Posterior vena cava (tissue), 2 donors: ENCODE measurements at regions of chr12 and their contacts with region 1.

Region 1: GRCh38 chr12:2205996-2206395 is 153.2 kb downstream of the CACNA1C start:
- DNase-seq: no peak

Region 2: GRCh38 chr12:2142068-2142467 is 63.9 kb before region 1 on chr12:
- intact Hi-C with region 1: loop called in 1 of 2 experiments (anchors 2 kb)
- DNase-seq: no peak

Region 3: GRCh38 chr12:2982127-2982760 is 776.2 kb after region 1 on chr12:
- intact Hi-C with region 1: no loop called
- DNase-seq: no peak